ENCODE measurements at regions of chr14 and their contacts with region 1.

Region 1: DNA sequence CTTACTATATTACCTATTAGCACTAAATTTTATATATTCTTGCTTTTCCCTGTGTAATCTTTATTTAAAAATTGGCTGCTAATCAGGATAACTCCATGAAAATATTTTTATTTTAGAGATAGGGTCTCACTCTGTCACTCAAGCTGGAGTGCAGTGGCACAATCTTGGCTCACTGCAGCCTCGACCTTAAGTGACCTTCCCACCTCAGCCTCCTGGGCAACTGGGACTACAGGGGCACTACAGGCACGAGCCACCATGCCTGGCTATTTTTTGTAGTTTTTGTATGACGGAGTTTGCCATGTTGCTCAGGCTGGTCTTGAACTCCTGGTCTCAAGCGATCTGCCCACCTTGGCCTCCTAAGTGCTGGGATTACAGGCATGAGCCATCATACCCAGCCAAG is 32.4 kb upstream of the VCPKMT start:
- DNase-seq: no peak
- ATAC-seq: no peak
- H3K4me3 ChIP-seq: no peak overlapping the region
- H3K27ac ChIP-seq: no peak overlapping the region
- H3K4me1 ChIP-seq: no peaks in the 10 kb centered on the region
- H3K27me3 ChIP-seq: no peaks in the 10 kb centered on the region
- CTCF ChIP-seq: no peak
- POLR2A ChIP-seq: no peak

Region 2: DNA sequence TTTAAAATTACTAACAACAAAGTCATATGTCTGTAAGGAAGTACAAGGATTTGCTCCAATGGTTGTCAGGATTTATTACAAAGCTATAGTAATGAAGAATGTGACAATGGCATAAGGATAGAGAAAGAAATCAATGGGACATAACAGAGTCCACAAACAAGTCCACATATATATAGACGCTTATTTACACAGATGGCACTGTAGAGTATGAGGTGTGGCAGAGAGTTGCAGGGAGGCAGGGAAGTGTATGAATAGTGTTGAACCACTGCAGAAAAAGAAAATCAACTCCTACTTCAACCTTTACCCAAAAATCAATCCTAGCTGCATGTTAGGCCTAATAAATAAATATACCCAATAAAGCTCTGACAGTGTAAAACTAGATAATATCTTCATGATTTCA is 61.3 kb after region 1 on chr14:
- intact Hi-C with region 1: no loop called
- DNase-seq: no peak
- ATAC-seq: no peak
- H3K4me3 ChIP-seq: no peak overlapping the region
- H3K27ac ChIP-seq: no peak overlapping the region
- H3K4me1 ChIP-seq: peaks cover 11% of the 10 kb centered on the region
- H3K27me3 ChIP-seq: no peaks in the 10 kb centered on the region
- CTCF ChIP-seq: no peak
- POLR2A ChIP-seq: no peak

Region 3: DNA sequence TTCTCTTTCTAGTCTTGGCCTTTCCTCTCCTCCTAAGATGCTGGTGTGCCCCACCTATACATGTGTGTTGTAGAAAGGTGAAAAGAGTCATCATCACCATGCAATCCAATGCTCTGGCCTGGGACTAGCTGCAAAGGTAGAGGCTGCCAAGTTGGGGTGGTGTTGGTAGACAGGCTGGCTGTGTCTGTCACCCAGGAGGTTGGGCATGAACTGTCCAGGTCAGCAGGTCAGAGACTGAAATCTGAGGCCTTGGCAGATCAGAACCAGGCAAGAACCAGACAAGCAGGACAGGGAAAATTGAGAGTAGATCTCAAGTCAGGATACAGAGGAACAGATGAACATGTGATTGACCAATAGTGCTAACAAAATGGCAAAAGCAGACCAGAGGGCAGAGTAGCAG is 137.1 kb after region 1 on chr14:
- intact Hi-C with region 1: loop called (anchors 10 kb)
- DNase-seq: no peak
- ATAC-seq: no peak
- H3K4me3 ChIP-seq: no peak overlapping the region
- H3K27ac ChIP-seq: no peak overlapping the region
- H3K4me1 ChIP-seq: no peaks in the 10 kb centered on the region
- H3K27me3 ChIP-seq: no peaks in the 10 kb centered on the region
- CTCF ChIP-seq: no peak
- POLR2A ChIP-seq: no peak